Heart left ventricle (tissue), 16 donors: ENCODE measurements at regions of chr19 and their contacts with region 1.

Region 1: GRCh38 chr19:11738746-11739620 is at the start of gene ZNF823:
- DNase-seq: peak; percentile 98 to 99 (median 99)
- ATAC-seq: peak; percentile 99 to 100 (median 100)
- H3K4me3 ChIP-seq: peak within 1 kb of the TSS; percentile 79 to 100 (median 92)
- H3K27ac ChIP-seq: peak within 1 kb of the TSS; percentile 77 to 96 (median 92)
- H3K4me1 ChIP-seq: peaks cover 0 to 27% (median 20%) of the 10 kb centered on the region in 12 donors
- H3K27me3 ChIP-seq: no peaks in the 10 kb centered on the region
- CTCF ChIP-seq: peak in 1 of 12 donors; percentile 9
- POLR2A ChIP-seq: peak in 1 of 2 donors; percentile 85
- total RNA-seq, gene ZNF823: 2.6 to 5.2 (median 4.0) TPM

Region 2: DNA sequence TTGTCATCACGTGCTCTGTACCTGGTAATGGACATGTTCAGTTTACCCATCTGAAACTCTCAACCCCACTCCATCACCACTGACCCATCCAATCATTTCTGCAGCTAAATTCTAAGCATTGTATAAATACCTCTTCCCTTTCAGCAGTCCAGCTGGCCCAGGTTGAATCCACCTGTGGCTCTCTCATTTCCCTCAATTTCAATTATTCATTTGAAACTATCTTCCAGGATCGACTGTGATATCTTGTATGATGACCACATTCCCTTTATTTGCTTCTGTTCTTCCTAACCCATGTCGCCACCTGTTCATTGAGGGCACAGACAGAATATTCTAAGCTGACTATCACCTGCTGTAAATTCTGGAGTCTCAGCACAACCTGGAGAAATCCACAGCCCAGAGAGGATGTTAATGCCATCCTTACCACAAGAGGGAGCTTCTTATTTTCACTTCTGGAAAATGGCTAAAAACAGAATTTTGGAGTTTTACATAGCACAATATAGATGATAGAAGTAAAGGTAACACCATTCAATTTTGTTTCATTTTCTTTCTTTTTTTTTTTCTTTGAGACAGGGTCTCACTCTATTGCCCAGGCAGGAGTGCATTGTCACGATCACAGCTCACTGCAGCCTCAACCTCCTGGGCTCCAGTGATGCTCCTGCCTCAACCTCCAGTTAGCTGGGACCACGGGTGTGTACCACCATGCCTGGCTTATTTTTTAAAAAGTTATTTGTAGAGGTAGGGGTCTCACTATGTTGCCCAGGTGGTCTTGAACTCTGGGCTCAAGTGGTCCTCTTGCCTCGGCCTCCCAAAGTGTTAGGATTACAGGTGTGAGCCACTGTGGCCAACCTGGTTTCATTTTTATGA is 38.8 kb before region 1 on chr19:
- intact Hi-C with region 1: loop called in 5 of 10 experiments (anchors 2 to 5 kb)
- DNase-seq: no peak
- ATAC-seq: no peak
- H3K4me3 ChIP-seq: no peak overlapping the region
- H3K27ac ChIP-seq: no peak overlapping the region
- H3K4me1 ChIP-seq: peaks cover 0 to 4% (median 2%) of the 10 kb centered on the region in 12 donors
- H3K27me3 ChIP-seq: no peaks in the 10 kb centered on the region
- CTCF ChIP-seq: peak; percentile 55 to 79 (median 66)
- POLR2A ChIP-seq: no peak

Region 3: GRCh38 chr19:11766597-11767591 is 27.9 kb after region 1 on chr19 and contains the start of gene ZNF441:
- intact Hi-C with region 1: loop called in 5 of 10 experiments (anchors 1 to 2 kb)
- DNase-seq: peak; percentile 97 to 98 (median 98)
- ATAC-seq: peak; percentile 99 to 100 (median 100)
- H3K4me3 ChIP-seq: peak within 1 kb of the TSS; percentile 58 to 97 (median 86)
- H3K27ac ChIP-seq: peak within 1 kb of the TSS; percentile 67 to 97 (median 93)
- H3K4me1 ChIP-seq: peaks cover 0 to 22% (median 12%) of the 10 kb centered on the region in 12 donors
- H3K27me3 ChIP-seq: no peaks in the 10 kb centered on the region
- CTCF ChIP-seq: peak in 1 of 12 donors; percentile 6
- POLR2A ChIP-seq: peak in 1 of 2 donors; percentile 92
- total RNA-seq, gene ZNF441: 2.6 to 9.3 (median 4.9) TPM